ENCODE measurements at regions of chr18 and their contacts with region 1.

Region 1: DNA sequence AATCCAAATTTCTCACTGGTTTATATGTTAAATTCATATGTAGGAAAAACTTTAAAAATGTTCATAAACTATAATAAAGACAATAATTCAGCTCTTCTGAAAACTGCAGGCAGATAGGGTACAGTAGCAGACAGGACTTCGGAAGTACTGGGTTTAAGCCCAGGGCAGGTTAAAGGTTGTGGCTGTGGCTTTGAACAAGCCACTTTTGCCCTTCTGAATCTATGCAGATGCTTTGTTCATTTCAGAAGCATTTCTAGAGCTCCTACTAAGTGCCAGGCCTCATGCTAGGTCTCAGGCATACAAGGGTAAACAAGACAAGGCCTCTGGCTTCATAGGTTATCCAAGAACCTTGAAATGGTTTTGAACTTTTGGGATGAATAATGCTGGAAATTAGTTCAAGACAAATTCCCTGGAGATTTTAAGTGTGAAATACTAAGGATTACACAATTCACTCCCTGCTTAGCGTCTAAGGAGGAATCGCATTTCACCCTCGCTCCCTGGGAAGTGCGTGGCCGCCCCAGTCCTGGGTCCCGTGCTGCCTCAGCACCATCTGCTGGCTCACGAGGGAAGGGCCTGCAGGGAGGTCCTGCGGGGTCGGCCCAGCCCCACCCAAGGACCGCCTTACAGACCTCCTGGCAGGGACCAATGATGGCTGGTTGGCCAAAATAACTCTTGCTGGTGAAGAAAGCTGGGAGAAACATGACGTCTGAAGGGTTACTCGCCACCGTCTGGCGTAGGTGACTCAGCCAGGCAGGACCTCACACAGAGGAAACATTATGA is 67.7 kb upstream of the L3MBTL4 start:
- DNase-seq: peak; percentile 25 to 50
- ATAC-seq: peak; percentile 52 to 55
- H3K4me3 ChIP-seq: no peak overlapping the region
- H3K27ac ChIP-seq: no peak overlapping the region
- H3K4me1 ChIP-seq: no peaks in the 10 kb centered on the region
- H3K27me3 ChIP-seq: no peaks in the 10 kb centered on the region
- CTCF ChIP-seq: peak in 4 of 5 experiments; percentile 20 to 46 (median 38)
- POLR2A ChIP-seq: no peak

Region 2: DNA sequence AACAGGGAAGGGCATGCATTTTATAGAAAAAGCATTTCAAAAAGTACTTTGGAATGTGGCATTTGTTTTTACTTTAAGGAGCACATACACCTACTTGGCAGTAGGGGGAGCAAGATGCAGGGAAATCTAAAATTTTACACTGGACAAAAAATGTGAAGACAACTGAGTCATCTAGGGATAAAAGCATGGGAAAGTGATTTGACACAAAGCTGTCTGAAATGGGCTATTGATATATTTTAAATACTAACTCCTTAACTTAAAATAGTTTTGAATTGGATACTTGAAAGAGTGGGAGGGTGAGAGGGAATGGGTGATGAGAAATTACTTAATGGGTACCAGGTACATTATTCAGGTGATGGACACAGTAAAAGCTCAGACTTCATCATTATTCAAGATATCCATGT is 602.9 kb before region 1 on chr18:
- in situ Hi-C with region 1: loop called in 3 of 4 experiments (anchors 10 to 25 kb)
- intact Hi-C with region 1: loop called (anchors 5 kb)
- DNase-seq: no peak
- ATAC-seq: no peak
- H3K4me3 ChIP-seq: no peak overlapping the region
- H3K27ac ChIP-seq: no peak overlapping the region
- H3K4me1 ChIP-seq: no peaks in the 10 kb centered on the region
- H3K27me3 ChIP-seq: peaks cover 0 to 8% (median 0%) of the 10 kb centered on the region in 3 donors
- CTCF ChIP-seq: peak in 3 of 5 experiments; percentile 43 to 63 (median 51)
- POLR2A ChIP-seq: no peak

Region 3: DNA sequence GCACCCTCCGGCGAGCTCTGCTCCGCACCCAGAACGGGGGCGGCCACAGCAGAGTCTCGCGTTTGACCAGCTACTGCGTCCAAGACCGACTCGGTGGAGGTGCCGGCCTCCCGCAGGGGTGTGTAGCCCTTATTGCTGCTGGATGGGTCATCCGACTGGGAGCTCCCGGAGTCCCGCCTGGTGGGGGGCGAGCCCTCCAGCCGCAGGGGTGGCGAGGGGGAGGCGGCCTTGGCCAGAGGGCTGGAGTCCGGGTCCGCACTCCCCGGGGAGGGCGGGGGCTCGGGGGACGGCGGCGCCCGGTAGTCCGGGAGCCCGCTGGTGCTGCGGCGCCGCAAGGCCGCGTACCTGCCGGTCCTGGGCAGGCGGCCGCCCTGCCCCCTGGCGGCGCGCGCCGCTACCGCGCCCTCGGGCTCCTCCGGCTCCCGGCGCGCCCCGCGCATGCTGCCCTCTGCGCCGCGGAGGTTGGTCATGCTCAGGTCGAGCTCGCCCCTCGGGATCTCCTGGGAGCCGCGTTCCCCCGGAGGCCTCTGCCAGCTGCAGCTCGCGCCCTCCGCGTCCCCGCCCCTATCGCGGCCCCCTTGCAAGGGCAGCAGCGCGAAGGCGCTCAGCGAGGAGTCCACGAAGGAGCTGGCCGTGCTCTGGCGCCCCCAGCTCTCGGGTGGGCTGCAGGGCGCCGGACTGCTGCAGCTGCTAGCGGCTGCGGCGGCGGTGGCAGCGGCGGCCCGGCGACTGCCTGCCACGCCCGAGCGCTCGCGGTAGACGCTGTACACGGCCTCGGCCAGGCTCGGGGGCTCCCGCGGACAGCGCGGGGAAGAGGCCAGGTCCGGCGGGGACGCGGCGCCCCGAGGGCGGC is 591.8 kb before region 1 on chr18:
- in situ Hi-C with region 1: loop called in 3 of 4 experiments (anchors 10 to 25 kb)
- intact Hi-C with region 1: no loop called
- DNase-seq: no peak
- ATAC-seq: peak; percentile 47 to 74
- H3K4me3 ChIP-seq: peak overlapping the region; percentile 42 to 60 (median 48)
- H3K27ac ChIP-seq: no peak overlapping the region
- H3K4me1 ChIP-seq: peaks cover 0 to 8% of the 10 kb centered on the region in 2 donors
- H3K27me3 ChIP-seq: peaks cover 23 to 50% (median 41%) of the 10 kb centered on the region in 3 donors
- CTCF ChIP-seq: peak in 4 of 5 experiments; percentile 28 to 70 (median 62)
- POLR2A ChIP-seq: no peak

Region 4: DNA sequence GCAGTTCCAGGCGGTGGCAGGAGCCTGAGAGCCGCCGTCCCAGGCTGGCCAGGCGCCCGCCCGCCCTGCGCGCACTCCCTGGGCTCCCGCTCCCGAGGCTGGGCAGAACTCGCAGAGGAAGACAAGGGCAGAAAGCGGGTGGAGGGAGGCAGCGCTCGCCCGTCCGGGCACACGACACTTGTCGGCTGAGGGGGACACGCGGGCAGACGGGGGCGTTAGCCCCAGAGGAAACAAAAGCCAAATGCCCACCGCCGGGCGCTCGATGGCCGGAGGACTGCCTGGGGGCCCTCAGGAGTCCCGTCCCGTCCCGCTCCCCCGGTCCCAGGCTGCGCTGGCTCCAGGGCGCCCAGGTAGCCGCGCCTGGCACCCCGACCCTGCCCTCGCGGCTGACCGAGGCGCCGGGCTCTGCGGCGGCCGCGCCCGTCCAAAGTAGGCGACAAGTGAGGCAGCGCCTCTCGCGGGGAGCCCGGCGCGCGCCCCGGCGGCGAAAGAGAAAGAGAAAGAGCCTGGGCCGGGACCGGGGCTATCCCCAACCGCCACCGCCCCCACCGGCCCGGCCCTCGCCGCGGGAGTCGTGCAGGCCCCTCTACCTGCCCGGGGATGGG is 68.2 kb before region 1 on chr18:
- in situ Hi-C with region 1: no loop called
- intact Hi-C with region 1: no loop called
- DNase-seq: peak; percentile 7 to 33
- ATAC-seq: peak; percentile 73 to 85
- H3K4me3 ChIP-seq: peak overlapping the region; percentile 54 to 74 (median 62)
- H3K27ac ChIP-seq: peak overlapping the region; percentile 46 to 61 (median 56)
- H3K4me1 ChIP-seq: no peaks in the 10 kb centered on the region
- H3K27me3 ChIP-seq: peaks cover 4 to 20% (median 5%) of the 10 kb centered on the region in 3 donors
- CTCF ChIP-seq: no peak
- POLR2A ChIP-seq: no peak